H1 (cell line): ENCODE measurements at regions of chr3 and their contacts with region 1.

Region 1: GRCh38 chr3:39118079-39118478 is 10.6 kb downstream of the TTC21A start:
- DNase-seq: no peak
- H3K4me3 ChIP-seq: no peak overlapping the region
- H3K27ac ChIP-seq: no peak overlapping the region
- H3K4me1 ChIP-seq: no peaks in the 10 kb centered on the region
- H3K27me3 ChIP-seq: no peaks in the 10 kb centered on the region; a peak in 1 of 7 replicates
- CTCF ChIP-seq: no peak
- EP300 ChIP-seq: no peak
- POLR2A ChIP-seq: no peak
- RAD21 ChIP-seq: no peak

Region 2: GRCh38 chr3:39000008-39000450 is 118.0 kb before region 1 on chr3:
- CTCF ChIA-PET with region 1: no interaction called
- POLR2A ChIA-PET with region 1: no interaction called
- DNase-seq: no peak
- H3K4me3 ChIP-seq: no peak overlapping the region
- H3K27ac ChIP-seq: no peak overlapping the region
- H3K4me1 ChIP-seq: no peaks in the 10 kb centered on the region
- H3K27me3 ChIP-seq: no peaks in the 10 kb centered on the region
- CTCF ChIP-seq: peak in 2 of 3 experiments; percentile 92 to 98; a peak in 3 of 4 replicates
- EP300 ChIP-seq: no peak
- POLR2A ChIP-seq: no peak
- RAD21 ChIP-seq: peak; percentile 92

Region 3: GRCh38 chr3:39051647-39052561 is 66.2 kb before region 1 on chr3 and contains the starts of genes SCN11A and WDR48:
- CTCF ChIA-PET with region 1: no interaction called
- POLR2A ChIA-PET with region 1: no interaction called
- DNase-seq: peak; percentile 72 to 91
- H3K4me3 ChIP-seq: peak within 1 kb of the TSS; percentile 66 to 88 (median 72)
- H3K27ac ChIP-seq: peak within 1 kb of the TSS; percentile 98
- H3K4me1 ChIP-seq: peaks cover 0 to 6% (median 0%) of the 10 kb centered on the region in 4 experiments; a peak in 1 of 7 replicates
- H3K27me3 ChIP-seq: no peaks in the 10 kb centered on the region
- CTCF ChIP-seq: no peak
- EP300 ChIP-seq: 0 out of 3 replicates have a peak, but pooled peaks of 1 of the 2 experiments have one; percentile 37
- POLR2A ChIP-seq: peak; percentile 97 to 100
- RAD21 ChIP-seq: no peak
- total RNA-seq, gene SCN11A: 0.10 and 0.11 TPM in 2 replicates
- total RNA-seq, gene WDR48: 47.8 and 54.1 TPM in 2 replicates

Region 4: DNA sequence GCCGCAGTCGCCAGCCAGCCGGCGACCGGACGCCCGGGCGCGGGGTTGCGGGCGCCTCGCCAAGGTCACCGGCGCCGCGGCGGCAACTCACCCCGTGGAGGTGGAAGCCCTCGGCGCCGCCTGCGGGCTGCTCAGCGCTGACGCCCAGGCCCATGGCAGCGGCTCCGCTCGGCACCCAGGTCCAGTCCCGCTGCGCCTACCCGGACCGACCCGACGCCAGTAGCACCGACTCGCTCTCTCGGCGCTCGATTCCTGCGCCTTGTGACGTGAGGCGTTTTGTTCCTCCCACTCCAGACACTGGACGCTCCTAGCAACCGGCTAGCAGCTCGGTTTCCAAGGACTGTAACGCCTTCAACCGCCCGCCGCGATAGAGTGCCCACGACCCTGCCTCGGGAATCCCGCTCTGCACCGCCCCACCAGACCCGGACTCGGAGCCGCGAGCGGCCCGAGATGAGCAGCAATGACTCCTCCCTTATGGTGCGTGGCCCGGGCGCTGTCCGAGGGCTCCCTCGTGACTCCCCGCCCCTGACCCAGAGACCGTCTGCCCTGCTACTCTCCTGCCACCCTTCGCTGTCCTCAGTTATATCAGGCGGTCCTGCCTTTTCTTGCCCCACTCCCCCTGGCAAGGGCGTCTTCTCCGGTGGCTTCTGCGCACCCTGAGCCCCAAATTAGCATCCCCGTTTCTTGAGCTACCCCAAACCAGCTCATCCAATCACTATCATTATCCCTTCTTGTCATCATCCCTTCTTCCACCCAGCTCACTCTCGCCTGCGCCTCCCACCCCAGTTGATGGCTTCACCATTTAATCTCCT is 10.5 kb before region 1 on chr3 and contains the starts of genes GORASP1 and TTC21A:
- CTCF ChIA-PET with region 1: interaction called, 17 read pairs
- POLR2A ChIA-PET with region 1: interaction called, 6 read pairs
- DNase-seq: peak in 1 of 2 experiments; percentile 86
- H3K4me3 ChIP-seq: peak within 1 kb of the TSS; percentile 77 to 92 (median 84)
- H3K27ac ChIP-seq: no peak within 1 kb of the TSS
- H3K4me1 ChIP-seq: no peaks in the 10 kb centered on the region; a peak in 2 of 7 replicates
- H3K27me3 ChIP-seq: peaks cover 0 to 8% (median 3%) of the 10 kb centered on the region in 4 experiments; a peak in 2 of 7 replicates
- CTCF ChIP-seq: no peak
- EP300 ChIP-seq: no peak
- POLR2A ChIP-seq: no peak
- RAD21 ChIP-seq: peak in 1 of 2 experiments; percentile 2; a peak in 1 of 4 replicates
- total RNA-seq, gene GORASP1: 33.4 and 39.3 TPM in 2 replicates
- total RNA-seq, gene TTC21A: 1.7 and 2.8 TPM in 2 replicates